Heart left ventricle (tissue), 16 donors: ENCODE measurements at regions of chr20 and their contacts with region 1.

Region 1: DNA sequence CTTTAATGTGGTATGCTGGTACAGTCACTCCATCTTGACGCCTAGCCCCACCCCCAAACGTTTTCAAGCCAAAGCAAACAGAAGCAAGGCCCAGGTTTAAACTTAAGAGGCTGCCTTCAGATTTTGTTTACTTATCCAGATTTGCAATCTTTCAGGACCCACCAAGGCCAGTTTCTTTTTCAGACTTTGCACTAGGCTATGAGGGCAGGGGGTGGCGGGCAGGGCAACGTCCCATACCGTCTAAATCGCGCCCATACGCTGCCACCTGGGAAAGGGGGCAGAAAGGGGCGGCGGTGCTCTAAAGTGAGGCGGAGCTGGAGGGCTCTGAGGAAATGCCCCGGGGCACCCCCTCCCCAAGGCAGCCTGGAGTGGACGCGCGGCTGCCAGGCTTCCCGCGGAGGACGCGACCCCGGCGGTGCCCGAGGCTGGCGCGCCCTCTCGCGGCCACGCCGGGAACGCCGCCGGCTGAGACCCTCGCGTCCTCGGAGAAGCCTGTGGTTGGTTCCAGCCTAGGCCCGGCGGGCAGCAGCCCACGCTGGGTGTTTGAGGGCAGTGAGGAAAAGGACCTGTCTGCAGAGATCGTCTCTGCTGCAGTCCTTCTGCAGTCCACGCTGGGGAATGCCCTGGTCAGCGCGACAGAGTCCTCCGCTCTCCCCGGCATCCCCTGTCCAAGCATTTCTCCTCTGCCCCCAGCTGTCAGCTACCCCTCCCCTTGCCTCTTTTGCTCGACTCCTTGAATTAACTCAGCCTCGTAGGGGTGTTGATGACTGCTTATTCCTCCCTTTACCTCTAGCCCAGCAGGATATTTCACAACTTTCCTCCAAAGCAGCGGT is 129.2 kb upstream of the PRND start:
- DNase-seq: peak in 3 of 5 donors; percentile 38 to 70 (median 48)
- ATAC-seq: peak in 3 of 4 donors; percentile 66 to 86 (median 79)
- H3K4me3 ChIP-seq: peak overlapping the region in 11 of 12 donors; percentile 6 to 54 (median 35)
- H3K27ac ChIP-seq: no peak overlapping the region
- H3K4me1 ChIP-seq: peaks cover 0 to 11% (median 6%) of the 10 kb centered on the region in 12 donors
- H3K27me3 ChIP-seq: peaks cover 0 to 19% (median 5%) of the 10 kb centered on the region in 9 donors
- CTCF ChIP-seq: peak; percentile 79 to 98 (median 92)
- POLR2A ChIP-seq: no peak

Region 2: DNA sequence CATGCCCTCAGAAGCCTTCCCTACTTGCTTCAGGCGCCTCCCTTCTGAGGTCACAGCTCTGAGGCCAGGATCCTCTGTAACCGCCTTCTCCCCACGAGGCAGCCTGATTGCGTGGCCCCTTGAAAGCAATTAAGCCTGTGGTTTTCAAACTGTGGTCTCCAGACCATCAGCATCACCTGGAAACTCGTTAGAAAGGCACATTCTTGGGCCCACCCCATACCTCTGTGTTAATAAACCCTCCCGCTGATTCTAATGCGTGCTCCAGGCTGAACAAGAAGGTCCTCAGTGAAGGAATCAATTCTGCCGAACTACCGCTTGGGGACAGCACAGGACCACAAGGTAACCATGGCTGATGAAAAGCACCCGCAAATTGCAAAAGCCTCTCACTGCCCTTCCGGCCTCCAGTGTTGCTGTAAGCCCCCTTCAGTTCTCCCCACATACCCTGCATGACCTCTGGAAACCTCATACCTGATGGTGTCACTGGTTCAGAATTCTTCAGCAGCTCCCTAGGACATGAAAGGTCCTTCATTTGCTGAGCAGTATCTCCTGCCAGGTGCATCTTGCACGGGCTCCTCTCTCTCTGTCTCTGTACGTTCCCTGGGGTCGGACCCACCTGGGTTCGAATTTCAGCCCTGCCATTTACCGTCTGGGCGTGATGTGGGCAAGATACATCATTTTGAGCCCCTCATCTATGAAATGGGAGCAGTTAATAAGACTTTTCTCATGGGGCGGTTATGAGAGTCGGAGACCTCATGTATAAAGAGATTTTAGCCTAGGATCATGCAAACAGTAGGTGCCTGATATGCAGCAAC is 483.8 kb before region 1 on chr20:
- intact Hi-C with region 1: loop called (anchors 2 to 10 kb)
- DNase-seq: peak in 4 of 5 donors; percentile 52 to 66 (median 60)
- ATAC-seq: peak; percentile 84 to 91 (median 88)
- H3K4me3 ChIP-seq: no peak overlapping the region
- H3K27ac ChIP-seq: no peak overlapping the region
- H3K4me1 ChIP-seq: peaks cover 0 to 24% (median 7%) of the 10 kb centered on the region in 12 donors
- H3K27me3 ChIP-seq: no peaks in the 10 kb centered on the region
- CTCF ChIP-seq: peak; percentile 90 to 99 (median 97)
- POLR2A ChIP-seq: no peak

Region 3: DNA sequence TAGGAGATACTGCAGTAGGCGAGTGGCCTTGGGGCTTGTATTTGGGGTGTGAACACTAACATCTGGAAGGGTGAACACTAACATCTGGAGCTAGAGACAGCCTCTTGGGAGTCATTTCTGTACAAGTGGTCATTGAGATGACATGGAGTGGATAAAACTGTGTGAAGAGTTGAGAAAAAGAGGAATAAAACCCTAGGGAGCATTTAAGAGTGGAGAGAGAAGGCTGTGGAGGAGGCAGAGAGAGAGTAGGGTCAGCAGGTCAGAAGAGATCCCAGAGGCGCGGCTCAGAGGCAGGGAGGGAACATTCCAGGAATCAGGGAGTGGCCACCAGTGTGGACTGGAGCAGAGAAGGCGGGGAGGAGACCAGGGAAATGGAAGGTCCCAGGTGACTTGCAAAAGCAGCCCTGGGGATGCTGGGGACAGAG is 375.2 kb before region 1 on chr20:
- intact Hi-C with region 1: loop called in 1 of 10 experiments (anchors 2 kb)
- DNase-seq: peak in 4 of 5 donors; percentile 32 to 61 (median 56)
- ATAC-seq: peak; percentile 42 to 67 (median 54)
- H3K4me3 ChIP-seq: no peak overlapping the region
- H3K27ac ChIP-seq: no peak overlapping the region
- H3K4me1 ChIP-seq: peaks cover 0 to 17% (median 2%) of the 10 kb centered on the region in 12 donors
- H3K27me3 ChIP-seq: peaks cover 0 to 17% (median 8%) of the 10 kb centered on the region in 9 donors
- CTCF ChIP-seq: no peak
- POLR2A ChIP-seq: no peak

Region 4: GRCh38 chr20:4244700-4245485 is 347.6 kb before region 1 on chr20:
- intact Hi-C with region 1: loop called in 2 of 10 experiments (anchors 1 to 2 kb)
- DNase-seq: no peak
- ATAC-seq: no peak
- H3K4me3 ChIP-seq: no peak overlapping the region
- H3K27ac ChIP-seq: no peak overlapping the region
- H3K4me1 ChIP-seq: peaks cover 0 to 15% (median 3%) of the 10 kb centered on the region in 12 donors
- H3K27me3 ChIP-seq: peaks cover 4 to 53% (median 30%) of the 10 kb centered on the region in 9 donors
- CTCF ChIP-seq: no peak
- POLR2A ChIP-seq: no peak

Region 5: GRCh38 chr20:4256874-4257273 is 335.7 kb before region 1 on chr20:
- intact Hi-C with region 1: loop called in 1 of 10 experiments (anchors 2 kb)
- DNase-seq: peak in 1 of 5 donors; percentile 39
- ATAC-seq: peak in 2 of 4 donors; percentile 51 to 75
- H3K4me3 ChIP-seq: no peak overlapping the region
- H3K27ac ChIP-seq: no peak overlapping the region
- H3K4me1 ChIP-seq: peaks cover 0 to 9% (median 0%) of the 10 kb centered on the region in 12 donors
- H3K27me3 ChIP-seq: peaks cover 0 to 14% (median 0%) of the 10 kb centered on the region in 9 donors
- CTCF ChIP-seq: no peak
- POLR2A ChIP-seq: no peak